ENCODE measurements at regions of chr16 and their contacts with region 1.

Region 1: GRCh38 chr16:84186685-84187437 is at the start of gene TAF1C:
- DNase-seq: peak; percentile 94 to 97
- ATAC-seq: peak; percentile 92 to 95
- H3K4me3 ChIP-seq: peak within 1 kb of the TSS; percentile 84
- H3K27ac ChIP-seq: peak within 1 kb of the TSS; percentile 87 to 94
- H3K4me1 ChIP-seq: peaks cover 6% of the 10 kb centered on the region; the same call in 2 of the 3 replicates
- CTCF ChIP-seq: peak; percentile 91
- EP300 ChIP-seq: no peak
- POLR2A ChIP-seq: peak; percentile 75
- RAD21 ChIP-seq: peak; percentile 59 to 77
- polyA plus RNA-seq, gene TAF1C: 13.2 and 17.8 TPM in 2 replicates

Region 2: GRCh38 chr16:83863682-83864081 is 323.2 kb before region 1 on chr16:
- CTCF ChIA-PET with region 1: no interaction called
- POLR2A ChIA-PET with region 1: no interaction called
- DNase-seq: no peak
- ATAC-seq: no peak
- H3K4me3 ChIP-seq: no peak overlapping the region
- H3K27ac ChIP-seq: no peak overlapping the region
- H3K4me1 ChIP-seq: no peaks in the 10 kb centered on the region
- CTCF ChIP-seq: no peak
- EP300 ChIP-seq: no peak
- POLR2A ChIP-seq: no peak
- RAD21 ChIP-seq: no peak

Region 3: DNA sequence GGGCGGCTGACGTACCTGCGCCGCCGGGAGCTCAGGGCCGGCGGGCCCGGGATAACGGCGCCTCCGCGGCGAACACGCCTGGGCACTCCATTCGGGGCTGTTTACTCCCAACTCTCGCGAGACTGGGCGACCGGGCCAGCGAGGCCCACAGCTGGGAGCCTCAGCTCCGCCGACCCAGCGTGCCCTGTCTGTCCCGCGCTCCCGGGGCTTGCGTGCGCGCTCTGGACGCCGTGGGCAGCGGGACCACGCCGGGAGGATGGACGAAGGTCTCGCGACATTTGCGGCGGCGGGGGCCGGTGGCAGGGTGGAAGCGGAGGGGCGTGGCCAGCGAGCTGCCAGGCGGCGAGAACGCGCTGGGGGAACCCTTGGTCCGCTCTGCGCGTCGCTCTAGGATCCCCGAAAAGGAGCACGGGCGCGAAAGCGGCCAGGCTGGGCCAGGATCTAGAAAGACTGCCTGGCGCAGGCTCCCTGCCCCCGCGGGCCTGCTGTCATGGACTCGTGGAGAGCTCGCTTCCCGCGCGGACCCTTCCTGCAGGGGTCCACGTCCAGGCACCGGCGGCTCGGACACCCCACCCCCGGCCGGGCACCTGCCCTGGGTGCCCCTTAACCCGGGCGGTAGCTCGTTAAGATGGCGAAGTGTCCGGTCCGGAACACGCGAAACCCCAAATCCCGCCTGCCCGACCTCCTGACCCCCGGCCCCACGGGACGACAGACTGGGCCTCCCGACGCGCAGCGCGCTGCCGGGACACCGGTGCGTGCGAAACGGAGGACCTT is 70.0 kb before region 1 on chr16 and contains the start of gene MBTPS1:
- CTCF ChIA-PET with region 1: interaction called, 13 read pairs
- POLR2A ChIA-PET with region 1: interaction called, 10 read pairs
- DNase-seq: peak; percentile 94 to 98
- ATAC-seq: peak; percentile 96 to 98
- H3K4me3 ChIP-seq: peak within 1 kb of the TSS; percentile 76
- H3K27ac ChIP-seq: peak within 1 kb of the TSS; percentile 88 to 96
- H3K4me1 ChIP-seq: peaks cover 8% of the 10 kb centered on the region
- CTCF ChIP-seq: no peak; the same call in 2 of the 3 replicates
- EP300 ChIP-seq: no peak; a peak in 1 of 5 replicates
- POLR2A ChIP-seq: peak; percentile 70
- RAD21 ChIP-seq: no peak
- polyA plus RNA-seq, gene MBTPS1: 76.7 and 88.4 TPM in 2 replicates

Region 4: DNA sequence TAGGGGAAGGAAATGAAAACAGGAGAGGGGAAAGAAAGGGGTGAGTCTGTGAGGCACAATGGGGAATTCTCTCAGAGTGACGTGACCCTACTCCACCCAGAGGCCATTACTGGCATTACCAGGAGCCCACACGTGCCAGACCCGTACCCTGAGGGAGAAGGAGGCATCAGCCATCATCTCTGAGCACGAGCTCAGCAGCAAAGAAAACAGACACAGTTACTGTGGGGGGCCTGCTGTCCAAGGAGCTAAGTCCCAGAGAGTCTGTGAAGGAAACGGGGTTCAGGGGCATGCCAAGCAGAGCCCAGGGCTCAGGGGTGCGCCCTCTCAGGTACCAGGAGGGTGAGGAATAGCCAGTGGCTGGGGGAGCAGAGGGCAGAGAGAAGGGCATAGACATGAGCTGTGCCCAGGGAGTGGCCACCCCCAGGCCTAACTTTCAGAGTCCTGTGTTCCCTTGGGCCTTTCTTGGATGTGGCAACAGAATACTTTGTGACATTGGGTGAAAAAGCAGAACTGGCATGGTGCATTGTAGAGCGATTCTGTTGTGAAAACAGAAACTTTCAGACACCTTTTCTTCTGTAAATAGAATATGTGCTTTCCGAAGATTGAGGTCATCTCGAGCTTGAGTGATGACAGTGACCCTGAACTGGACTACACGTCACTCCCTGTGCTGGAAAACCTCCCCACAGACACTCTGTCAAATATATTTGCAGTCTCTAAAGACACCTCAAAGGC is 11.3 kb before region 1 on chr16:
- CTCF ChIA-PET with region 1: interaction called, 63 read pairs
- POLR2A ChIA-PET with region 1: interaction called, 4 read pairs
- DNase-seq: peak in 1 of 2 experiments; percentile 55
- ATAC-seq: peak; percentile 69 to 81
- H3K4me3 ChIP-seq: no peak overlapping the region
- H3K27ac ChIP-seq: peak overlapping the region in 1 of 2 experiments; percentile 72; a peak in 2 of 6 replicates
- H3K4me1 ChIP-seq: peaks cover 29% of the 10 kb centered on the region
- CTCF ChIP-seq: peak; percentile 40; the same call in 2 of the 3 replicates
- EP300 ChIP-seq: no peak
- POLR2A ChIP-seq: no peak
- RAD21 ChIP-seq: peak; percentile 53 to 59

Region 5: GRCh38 chr16:84234321-84235241 is 47.7 kb after region 1 on chr16:
- CTCF ChIA-PET with region 1: interaction called, 14 read pairs
- POLR2A ChIA-PET with region 1: no interaction called
- DNase-seq: no peak
- ATAC-seq: no peak
- H3K4me3 ChIP-seq: no peak overlapping the region
- H3K27ac ChIP-seq: 0 out of 6 replicates have a peak overlapping the region, but pooled peaks of 1 of the 2 experiments have one; percentile 17
- H3K4me1 ChIP-seq: peaks cover under 1% of the 10 kb centered on the region; the same call in 1 of the 3 replicates
- CTCF ChIP-seq: no peak
- EP300 ChIP-seq: no peak
- POLR2A ChIP-seq: no peak
- RAD21 ChIP-seq: no peak

Region 6: DNA sequence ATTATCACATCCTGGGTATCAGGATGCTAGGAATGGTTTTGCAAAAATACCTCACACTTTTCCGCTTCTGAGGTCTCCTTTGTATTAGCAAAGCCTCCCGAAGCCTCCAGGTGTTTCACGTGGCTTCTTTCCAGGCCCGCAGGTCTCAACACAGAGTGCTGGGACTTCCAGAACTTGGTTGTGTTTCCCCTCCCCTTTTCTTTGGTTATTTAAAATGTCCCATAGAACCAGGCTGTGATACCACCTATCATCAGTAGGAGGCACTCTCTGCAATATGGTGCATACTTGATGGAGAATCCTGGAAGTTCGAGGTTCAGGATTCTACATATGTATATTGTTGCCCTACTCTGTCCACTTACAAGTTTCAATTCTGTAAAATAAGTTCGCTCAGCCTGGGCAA is 210.2 kb after region 1 on chr16:
- CTCF ChIA-PET with region 1: no interaction called
- POLR2A ChIA-PET with region 1: no interaction called
- DNase-seq: peak in 1 of 2 experiments; percentile 35
- ATAC-seq: peak in 1 of 2 experiments; percentile 33; a peak in 2 of 6 replicates
- H3K4me3 ChIP-seq: no peak overlapping the region
- H3K27ac ChIP-seq: peak overlapping the region; percentile 71 to 88
- H3K4me1 ChIP-seq: peaks cover 36% of the 10 kb centered on the region
- CTCF ChIP-seq: peak; percentile 26; the same call in 2 of the 3 replicates
- EP300 ChIP-seq: no peak
- POLR2A ChIP-seq: no peak
- RAD21 ChIP-seq: no peak

Region 7: DNA sequence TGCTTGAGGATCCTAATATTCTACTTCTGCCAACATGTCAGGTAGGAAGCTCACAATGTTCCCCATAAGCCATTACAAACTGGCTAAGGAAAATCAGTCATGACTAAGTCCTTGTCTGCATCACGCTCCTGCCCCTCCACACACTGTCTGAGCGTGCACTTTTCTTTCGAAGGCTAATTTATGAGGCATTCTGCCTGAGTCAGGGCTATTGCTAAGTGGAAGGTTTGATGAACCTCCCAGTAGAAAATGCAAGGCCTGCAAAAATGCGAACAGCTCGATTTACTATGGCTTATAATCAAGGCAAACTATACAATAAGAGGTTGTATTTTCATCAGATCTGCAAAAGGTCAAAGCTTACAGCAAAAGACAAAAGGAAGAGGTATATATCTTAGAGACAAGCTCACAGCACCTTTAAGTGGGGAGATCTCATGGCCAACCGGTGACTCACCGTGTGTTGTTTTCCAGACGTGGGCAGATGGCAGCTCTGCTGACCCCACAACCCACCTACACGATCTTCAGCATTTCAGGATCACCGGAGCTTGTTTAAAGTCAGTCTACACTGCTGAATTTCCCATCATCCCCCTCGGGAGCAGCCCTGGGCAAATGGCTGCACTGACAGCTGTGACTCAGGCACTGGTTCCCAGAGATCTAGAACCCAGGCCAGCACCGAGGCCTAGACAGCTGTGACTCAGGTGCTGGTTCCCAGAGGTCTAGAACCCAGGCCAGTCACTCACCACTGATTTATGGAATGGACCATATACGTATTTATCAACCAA is 291.5 kb after region 1 on chr16:
- CTCF ChIA-PET with region 1: interaction called, 92 read pairs
- POLR2A ChIA-PET with region 1: no interaction called
- DNase-seq: no peak
- ATAC-seq: peak in 1 of 2 experiments; percentile 25; a peak in 1 of 6 replicates
- H3K4me3 ChIP-seq: no peak overlapping the region
- H3K27ac ChIP-seq: no peak overlapping the region
- H3K4me1 ChIP-seq: no peaks in the 10 kb centered on the region
- CTCF ChIP-seq: no peak
- EP300 ChIP-seq: no peak
- POLR2A ChIP-seq: no peak
- RAD21 ChIP-seq: no peak

Measured in A549 (cell line).